ENCODE measurements at regions of chr3 and their contacts with region 1.

Region 1: GRCh38 chr3:196073188-196073838 is 8.6 kb downstream of the TFRC start:
- DNase-seq: peak; percentile 80
- ATAC-seq: peak; percentile 95
- H3K4me3 Mint-ChIP-seq: no peak overlapping the region
- H3K27ac Mint-ChIP-seq: no peak overlapping the region
- H3K4me1 Mint-ChIP-seq: peaks cover 35% of the 10 kb centered on the region
- H3K27me3 Mint-ChIP-seq: no peaks in the 10 kb centered on the region

Region 2: GRCh38 chr3:196051282-196052076 is 21.8 kb before region 1 on chr3:
- CTCF ChIA-PET with region 1: interaction called, 17 read pairs
- POLR2A ChIA-PET with region 1: interaction called, 3 read pairs
- DNase-seq: no peak
- ATAC-seq: no peak
- H3K4me3 Mint-ChIP-seq: no peak overlapping the region
- H3K27ac Mint-ChIP-seq: no peak overlapping the region
- H3K4me1 Mint-ChIP-seq: no peaks in the 10 kb centered on the region
- H3K27me3 Mint-ChIP-seq: no peaks in the 10 kb centered on the region

Region 3: DNA sequence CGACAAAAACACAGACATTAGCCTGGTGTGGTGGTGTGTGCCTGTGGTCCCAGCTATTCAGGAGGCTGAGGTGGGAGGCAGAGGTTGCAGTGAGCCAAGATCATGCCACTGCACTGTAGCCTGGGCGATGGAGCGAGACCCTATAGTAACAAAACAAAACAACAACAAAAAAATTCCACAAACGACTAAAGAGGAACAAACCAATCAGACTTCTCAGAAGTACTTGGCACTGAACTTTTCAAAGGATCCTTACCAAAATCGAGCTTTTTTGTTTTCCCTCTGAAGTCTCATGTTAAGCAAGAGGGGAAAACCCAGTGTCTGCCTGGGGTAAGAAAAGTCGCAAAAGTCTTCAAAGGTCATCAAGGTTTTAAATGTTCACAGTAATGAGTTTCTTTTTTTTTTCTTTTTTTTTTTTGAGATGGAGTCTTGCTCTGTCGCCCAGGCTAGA is 38.6 kb after region 1 on chr3:
- CTCF ChIA-PET with region 1: interaction called, 12 read pairs
- POLR2A ChIA-PET with region 1: no interaction called
- DNase-seq: no peak
- ATAC-seq: peak; percentile 74
- H3K4me3 Mint-ChIP-seq: no peak overlapping the region
- H3K27ac Mint-ChIP-seq: no peak overlapping the region
- H3K4me1 Mint-ChIP-seq: peaks cover 10% of the 10 kb centered on the region
- H3K27me3 Mint-ChIP-seq: no peaks in the 10 kb centered on the region

Region 4: DNA sequence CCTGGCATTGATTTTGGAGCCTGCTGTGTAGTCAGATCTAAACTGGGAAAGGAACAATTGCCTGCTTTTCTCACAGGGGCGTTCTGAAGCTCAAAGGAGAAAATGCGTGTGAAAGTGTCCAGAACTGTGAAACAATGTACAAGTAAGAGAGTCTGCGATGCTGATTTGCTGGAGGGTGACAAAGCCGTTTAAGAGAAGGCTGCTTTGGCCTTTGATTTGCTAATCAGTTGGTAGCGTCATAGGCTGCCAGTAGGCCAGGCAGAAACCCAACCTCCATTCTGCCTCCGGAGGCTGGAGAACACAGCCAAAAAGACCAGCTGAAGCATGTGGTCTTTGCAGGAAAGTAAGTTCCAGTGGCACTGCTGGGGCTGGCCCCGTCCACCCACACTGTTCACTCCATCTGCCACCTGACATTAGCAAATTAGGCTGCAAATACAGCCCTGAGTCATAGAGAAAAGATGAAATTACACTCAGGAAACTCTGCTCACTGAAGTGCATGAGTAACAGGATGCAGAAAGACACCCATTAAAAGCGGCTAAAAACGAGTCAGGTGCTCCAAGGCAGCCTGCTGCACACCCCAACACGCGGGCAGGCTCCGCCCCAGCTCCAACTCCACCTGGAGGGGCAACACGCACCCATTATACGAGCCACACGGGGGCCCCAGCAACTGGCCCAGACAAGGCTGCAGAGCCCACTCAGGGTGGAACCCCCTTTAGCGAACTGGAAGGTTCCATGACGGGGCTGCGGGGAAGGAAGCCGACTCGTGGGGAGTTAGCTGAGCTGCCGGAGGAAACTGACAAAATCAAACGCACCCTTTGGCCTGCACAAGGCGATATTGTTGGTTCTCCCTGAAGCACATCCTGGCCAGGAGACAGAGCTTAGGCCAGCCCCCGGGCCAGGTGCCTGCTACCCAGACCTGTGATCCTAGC is 106.3 kb after region 1 on chr3:
- CTCF ChIA-PET with region 1: interaction called, 38 read pairs
- POLR2A ChIA-PET with region 1: interaction called, 9 read pairs
- DNase-seq: peak; percentile 95
- ATAC-seq: peak; percentile 85
- H3K4me3 Mint-ChIP-seq: peak overlapping the region; percentile 47
- H3K27ac Mint-ChIP-seq: peak overlapping the region; percentile 95
- H3K4me1 Mint-ChIP-seq: peaks cover 60% of the 10 kb centered on the region
- H3K27me3 Mint-ChIP-seq: no peaks in the 10 kb centered on the region

Region 5: GRCh38 chr3:196186651-196187573 is 113.6 kb after region 1 on chr3:
- CTCF ChIA-PET with region 1: interaction called, 66 read pairs
- POLR2A ChIA-PET with region 1: interaction called, 3 read pairs
- DNase-seq: no peak
- ATAC-seq: no peak
- H3K4me3 Mint-ChIP-seq: peak overlapping the region; percentile 26
- H3K27ac Mint-ChIP-seq: peak overlapping the region; percentile 81
- H3K4me1 Mint-ChIP-seq: peaks cover 43% of the 10 kb centered on the region
- H3K27me3 Mint-ChIP-seq: no peaks in the 10 kb centered on the region

Region 6: DNA sequence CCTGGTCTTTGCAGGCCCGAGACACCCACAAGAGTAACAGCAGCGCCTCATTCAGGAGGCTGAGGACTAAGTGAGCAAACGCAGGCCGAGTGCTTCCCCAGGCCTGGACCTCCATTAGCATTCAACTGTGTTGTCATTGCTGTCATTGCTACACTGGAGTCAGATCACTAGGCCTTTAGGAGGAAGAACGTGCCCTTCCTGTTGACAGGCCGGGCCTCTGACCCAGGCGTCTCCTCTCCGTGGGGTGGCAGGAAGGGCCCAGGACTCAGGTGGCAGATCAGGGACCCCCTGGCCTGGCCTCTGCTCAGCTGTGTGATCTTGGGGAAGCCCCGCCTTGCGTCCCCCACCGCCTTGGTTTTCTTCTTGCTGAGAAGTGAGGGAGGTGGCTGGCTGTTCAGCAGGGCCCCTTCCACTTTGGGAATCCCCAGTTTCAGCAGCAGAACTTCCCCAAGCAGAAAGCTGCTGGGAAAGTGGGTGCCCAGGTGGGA is 118.8 kb after region 1 on chr3:
- CTCF ChIA-PET with region 1: interaction called, 154 read pairs
- POLR2A ChIA-PET with region 1: interaction called, 8 read pairs
- DNase-seq: peak; percentile 42
- ATAC-seq: peak; percentile 8
- H3K4me3 Mint-ChIP-seq: no peak overlapping the region
- H3K27ac Mint-ChIP-seq: peak overlapping the region; percentile 91
- H3K4me1 Mint-ChIP-seq: peaks cover 46% of the 10 kb centered on the region
- H3K27me3 Mint-ChIP-seq: no peaks in the 10 kb centered on the region

Region 7: GRCh38 chr3:196198771-196199753 is 125.7 kb after region 1 on chr3:
- CTCF ChIA-PET with region 1: interaction called, 154 read pairs
- POLR2A ChIA-PET with region 1: interaction called, 8 read pairs
- DNase-seq: no peak
- ATAC-seq: no peak
- H3K4me3 Mint-ChIP-seq: no peak overlapping the region
- H3K27ac Mint-ChIP-seq: no peak overlapping the region
- H3K4me1 Mint-ChIP-seq: peaks cover 24% of the 10 kb centered on the region
- H3K27me3 Mint-ChIP-seq: peaks cover 7% of the 10 kb centered on the region

Region 8: DNA sequence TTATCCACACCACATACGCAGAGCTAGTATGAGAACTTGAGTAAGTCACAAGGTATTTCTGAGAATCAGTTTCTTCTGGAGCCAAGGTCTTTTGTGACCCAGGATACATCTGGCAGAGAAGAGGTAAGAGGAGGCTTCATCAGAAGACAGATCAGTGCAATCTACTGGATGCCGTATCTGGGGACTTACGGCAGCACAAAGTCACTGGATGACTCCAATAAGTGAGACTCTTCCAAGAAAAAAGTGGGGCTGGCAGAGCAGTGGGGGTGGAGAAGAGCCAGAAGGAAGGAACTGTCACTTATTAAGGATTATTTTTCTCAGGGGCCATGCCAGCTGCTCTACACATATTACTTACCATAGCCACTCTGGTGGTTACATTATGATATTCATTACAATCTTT is 390.5 kb after region 1 on chr3:
- CTCF ChIA-PET with region 1: no interaction called
- POLR2A ChIA-PET with region 1: no interaction called
- DNase-seq: no peak
- ATAC-seq: no peak
- H3K4me3 Mint-ChIP-seq: no peak overlapping the region
- H3K27ac Mint-ChIP-seq: no peak overlapping the region
- H3K4me1 Mint-ChIP-seq: peaks cover 3% of the 10 kb centered on the region
- H3K27me3 Mint-ChIP-seq: no peaks in the 10 kb centered on the region

Measured in activated CD8-positive, alpha-beta T cell treated with anti-CD3 and anti-CD28 coated beads, Interleukin-2, amount 10 ng/mL, durations not matched to agents 7 days and 5 days (primary cell).